ENCODE measurements at regions of chr22 and their contacts with region 1.

Region 1: GRCh38 chr22:41217553-41218157 is 12.5 kb downstream of the L3MBTL2 start:
- DNase-seq: peak; percentile 76
- ATAC-seq: peak; percentile 99
- H3K4me3 Mint-ChIP-seq: peak overlapping the region; percentile 48
- H3K27ac Mint-ChIP-seq: peak overlapping the region; percentile 91
- H3K4me1 Mint-ChIP-seq: peaks cover 16% of the 10 kb centered on the region
- H3K27me3 Mint-ChIP-seq: no peaks in the 10 kb centered on the region

Region 2: GRCh38 chr22:41204992-41205900 is 12.4 kb before region 1 on chr22 and contains the start of gene L3MBTL2:
- CTCF ChIA-PET with region 1: no interaction called
- POLR2A ChIA-PET with region 1: interaction called, 3 read pairs
- intact Hi-C with region 1: loop called in 1 of 2 experiments (anchors 1 kb)
- DNase-seq: peak; percentile 100
- ATAC-seq: peak; percentile 100
- H3K4me3 Mint-ChIP-seq: peak within 1 kb of the TSS; percentile 86
- H3K27ac Mint-ChIP-seq: peak within 1 kb of the TSS; percentile 89
- H3K4me1 Mint-ChIP-seq: peaks cover 20% of the 10 kb centered on the region
- H3K27me3 Mint-ChIP-seq: peaks cover 10% of the 10 kb centered on the region
- total RNA-seq, gene L3MBTL2: 24.4 to 25.1 TPM

Measured in activated CD4-positive, alpha-beta T cell treated with anti-CD3 and anti-CD28 coated beads for 36 hours (primary cell).